PC-3 (cell line): ENCODE measurements at regions of chr7 and their contacts with region 1.

Region 1: DNA sequence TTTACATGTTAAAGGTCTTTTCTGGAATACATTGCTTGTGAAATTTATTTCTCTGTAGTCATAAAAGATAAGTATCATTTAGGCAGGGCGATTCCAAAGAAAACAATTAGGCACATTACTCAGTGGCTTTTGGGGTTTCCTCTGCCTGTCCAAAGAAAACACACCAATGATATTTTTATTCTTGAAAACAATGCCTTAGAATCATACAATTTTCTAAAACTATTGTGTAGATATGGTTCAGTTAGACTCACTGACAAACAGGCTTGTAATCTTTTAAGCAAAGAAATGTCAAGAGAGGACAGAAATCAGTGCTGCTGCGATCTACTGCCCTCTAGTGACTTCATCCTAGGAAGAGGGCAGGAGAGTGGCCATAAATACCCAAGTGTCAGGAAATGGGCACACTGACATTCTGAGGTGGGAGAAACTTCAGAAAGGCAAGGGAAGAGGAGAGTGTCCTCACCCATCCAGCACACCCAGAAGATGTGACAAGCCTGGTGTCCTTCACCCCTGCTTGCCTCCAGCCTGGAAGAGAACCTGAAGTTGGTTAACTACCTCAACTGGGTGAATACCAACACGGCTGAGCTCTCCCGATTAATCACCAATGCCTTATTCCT is 120.5 kb downstream of the GALNT11 start:
- DNase-seq: peak; percentile 56
- ATAC-seq: peak; percentile 96
- H3K4me3 ChIP-seq: no peak overlapping the region
- H3K27ac ChIP-seq: no peak overlapping the region
- H3K4me1 ChIP-seq: no peaks in the 10 kb centered on the region
- H3K27me3 ChIP-seq: no peaks in the 10 kb centered on the region
- CTCF ChIP-seq: peak; percentile 78

Region 2: DNA sequence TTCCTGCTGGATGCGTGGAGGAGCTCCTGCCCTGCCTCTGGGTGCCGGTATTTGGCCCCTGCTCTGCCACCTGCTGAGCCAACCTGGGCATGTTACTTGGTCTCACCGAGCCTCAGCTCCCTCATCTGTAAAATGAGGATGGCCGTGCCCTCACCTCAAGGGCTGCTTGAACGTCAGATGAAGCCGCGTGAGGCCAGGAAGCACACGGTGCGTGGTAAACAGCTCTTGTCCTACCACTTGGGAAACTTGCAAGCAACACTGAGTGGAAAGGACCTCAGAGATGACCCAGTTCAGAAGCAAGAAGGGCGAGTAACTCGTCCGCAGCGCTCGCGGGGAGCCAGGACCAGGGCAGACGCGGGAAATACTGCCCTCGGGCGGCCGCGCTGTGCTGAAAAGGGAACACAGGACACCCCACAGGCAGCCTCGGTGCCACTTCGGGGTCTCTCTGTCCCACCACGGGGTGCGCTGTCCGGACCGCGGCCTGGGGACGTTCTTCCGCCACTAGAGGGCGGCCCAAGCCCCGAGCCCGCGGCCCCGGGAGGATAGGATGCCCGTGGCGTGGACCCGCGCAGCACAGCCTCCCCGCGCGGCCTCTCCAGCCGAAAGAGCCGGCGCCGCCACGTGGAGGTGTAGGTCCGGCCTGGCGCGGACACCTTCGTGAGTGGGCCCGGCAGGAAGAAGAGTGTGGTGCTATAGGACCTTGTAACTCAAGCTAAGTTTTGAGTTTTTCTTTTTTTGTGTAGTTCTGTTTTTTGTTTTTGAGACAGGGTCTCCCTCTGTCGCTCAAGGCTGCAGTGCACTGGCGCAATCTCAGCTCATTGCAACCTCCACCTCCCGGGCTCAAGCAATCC is 363.1 kb before region 1 on chr7:
- CTCF ChIA-PET with region 1: no interaction called
- POLR2A ChIA-PET with region 1: no interaction called
- intact Hi-C with region 1: loop called (anchors 5 kb)
- DNase-seq: peak; percentile 60
- ATAC-seq: peak; percentile 96
- H3K4me3 ChIP-seq: peak overlapping the region; percentile 49
- H3K27ac ChIP-seq: no peak overlapping the region
- H3K4me1 ChIP-seq: no peaks in the 10 kb centered on the region
- H3K27me3 ChIP-seq: no peaks in the 10 kb centered on the region
- CTCF ChIP-seq: peak; percentile 94

Region 3: DNA sequence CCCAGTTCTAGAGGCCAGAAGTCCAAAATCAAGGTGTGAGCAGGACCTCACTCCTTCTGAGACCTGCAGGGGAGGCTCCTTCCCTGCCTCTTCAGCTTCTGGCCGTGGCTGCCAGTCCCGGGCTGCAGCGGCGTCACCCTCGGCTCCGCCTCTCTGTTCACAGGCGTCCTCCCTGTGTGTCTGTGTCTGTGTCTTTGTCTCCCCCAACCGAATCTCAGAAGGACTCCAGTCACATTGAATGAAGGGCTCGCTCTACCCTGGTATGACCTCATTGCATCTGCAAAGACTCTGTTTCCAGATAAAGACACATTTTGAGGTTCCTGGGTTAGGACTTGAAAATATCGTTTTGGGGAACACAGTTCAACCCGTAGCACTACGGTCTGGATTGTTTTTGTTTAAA is 153.6 kb before region 1 on chr7:
- CTCF ChIA-PET with region 1: no interaction called
- POLR2A ChIA-PET with region 1: no interaction called
- intact Hi-C with region 1: loop called (anchors 10 kb)
- DNase-seq: peak; percentile 68
- ATAC-seq: peak; percentile 99
- H3K4me3 ChIP-seq: peak overlapping the region; percentile 20; the same call in 1 of the 2 replicates
- H3K27ac ChIP-seq: no peak overlapping the region
- H3K4me1 ChIP-seq: no peaks in the 10 kb centered on the region
- H3K27me3 ChIP-seq: no peaks in the 10 kb centered on the region
- CTCF ChIP-seq: peak; percentile 53

Region 4: GRCh38 chr7:152086513-152086912 is 59.4 kb before region 1 on chr7:
- CTCF ChIA-PET with region 1: interaction called, 10 read pairs
- POLR2A ChIA-PET with region 1: no interaction called
- intact Hi-C with region 1: no loop called
- DNase-seq: peak; percentile 15
- ATAC-seq: no peak
- H3K4me3 ChIP-seq: no peak overlapping the region
- H3K27ac ChIP-seq: no peak overlapping the region
- H3K4me1 ChIP-seq: no peaks in the 10 kb centered on the region
- H3K27me3 ChIP-seq: no peaks in the 10 kb centered on the region
- CTCF ChIP-seq: no peak

Region 5: GRCh38 chr7:152176797-152177196 is 30.8 kb after region 1 on chr7:
- CTCF ChIA-PET with region 1: no interaction called
- POLR2A ChIA-PET with region 1: no interaction called
- intact Hi-C with region 1: no loop called
- DNase-seq: no peak
- ATAC-seq: no peak
- H3K4me3 ChIP-seq: no peak overlapping the region
- H3K27ac ChIP-seq: no peak overlapping the region
- H3K4me1 ChIP-seq: no peaks in the 10 kb centered on the region
- H3K27me3 ChIP-seq: no peaks in the 10 kb centered on the region
- CTCF ChIP-seq: no peak